ENCODE measurements at regions of chr2 and their contacts with region 1.

Region 1: GRCh38 chr2:206693399-206694137 is 24.6 kb downstream of the DYTN start:
- DNase-seq: peak; percentile 69
- ATAC-seq: peak; percentile 83
- H3K4me3 ChIP-seq: no peak overlapping the region
- H3K27ac ChIP-seq: no peak overlapping the region
- H3K4me1 ChIP-seq: no peaks in the 10 kb centered on the region
- H3K27me3 ChIP-seq: peaks cover under 1% of the 10 kb centered on the region
- CTCF ChIP-seq: peak; percentile 69
- POLR2A ChIP-seq: no peak
- RAD21 ChIP-seq: peak; percentile 79

Region 2: DNA sequence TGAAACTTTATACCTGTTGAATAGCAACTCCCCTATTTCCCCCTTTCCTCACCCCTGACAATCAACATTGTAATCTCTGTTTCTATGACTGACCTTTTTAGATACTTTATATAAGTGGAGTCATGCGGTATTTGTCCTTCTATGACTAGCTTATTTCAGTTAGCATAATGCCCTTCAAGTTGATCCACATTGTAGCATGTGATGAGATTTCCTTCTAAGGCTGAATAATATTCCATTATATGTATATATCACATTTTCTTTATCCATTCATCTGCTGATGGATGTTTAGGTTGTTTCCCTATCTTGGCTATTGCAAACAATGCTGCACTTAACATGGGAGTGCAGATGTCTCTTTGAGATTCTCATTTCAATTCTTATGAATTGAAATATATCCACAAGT is 81.3 kb after region 1 on chr2:
- CTCF ChIA-PET with region 1: no interaction called
- POLR2A ChIA-PET with region 1: no interaction called
- dilution Hi-C with region 1: no loop called
- in situ Hi-C with region 1: loop called (anchors 5 kb)
- intact Hi-C with region 1: no loop called
- DNase-seq: no peak
- ATAC-seq: no peak
- H3K4me3 ChIP-seq: no peak overlapping the region
- H3K27ac ChIP-seq: no peak overlapping the region
- H3K4me1 ChIP-seq: no peaks in the 10 kb centered on the region
- H3K27me3 ChIP-seq: no peaks in the 10 kb centered on the region
- CTCF ChIP-seq: no peak
- POLR2A ChIP-seq: no peak
- RAD21 ChIP-seq: no peak

Region 3: GRCh38 chr2:206937555-206937954 is 244.0 kb after region 1 on chr2:
- CTCF ChIA-PET with region 1: no interaction called
- POLR2A ChIA-PET with region 1: no interaction called
- dilution Hi-C with region 1: no loop called
- in situ Hi-C with region 1: no loop called
- intact Hi-C with region 1: loop called (anchors 10 kb)
- DNase-seq: no peak
- ATAC-seq: no peak
- H3K4me3 ChIP-seq: no peak overlapping the region
- H3K27ac ChIP-seq: no peak overlapping the region
- H3K4me1 ChIP-seq: no peaks in the 10 kb centered on the region
- H3K27me3 ChIP-seq: no peaks in the 10 kb centered on the region
- CTCF ChIP-seq: no peak
- POLR2A ChIP-seq: no peak
- RAD21 ChIP-seq: no peak

Region 4: GRCh38 chr2:207625018-207625907 is 931.7 kb after region 1 on chr2 and contains the start of gene METTL21A:
- CTCF ChIA-PET with region 1: no interaction called
- POLR2A ChIA-PET with region 1: no interaction called
- dilution Hi-C with region 1: no loop called
- in situ Hi-C with region 1: no loop called
- intact Hi-C with region 1: loop called (anchors 10 kb)
- DNase-seq: peak; percentile 86
- ATAC-seq: peak; percentile 92
- H3K4me3 ChIP-seq: peak within 1 kb of the TSS; percentile 88
- H3K27ac ChIP-seq: peak within 1 kb of the TSS; percentile 98
- H3K4me1 ChIP-seq: peaks cover 6% of the 10 kb centered on the region; the same call in 1 of the 2 replicates
- H3K27me3 ChIP-seq: no peaks in the 10 kb centered on the region
- CTCF ChIP-seq: peak; percentile 43
- POLR2A ChIP-seq: peak; percentile 89
- RAD21 ChIP-seq: no peak; the same call in 1 of the 2 replicates
- total RNA-seq, gene METTL21A: 5.9 and 11.4 TPM in 2 replicates